Heart right ventricle (tissue), 16 donors: ENCODE measurements at regions of chr12 and their contacts with region 1.

Region 1: GRCh38 chr12:46675736-46676135 is 150.1 kb downstream of the SLC38A4 start:
- DNase-seq: peak in 1 of 2 donors; percentile 15
- ATAC-seq: no peak
- H3K4me3 ChIP-seq: no peak overlapping the region
- H3K27ac ChIP-seq: no peak overlapping the region
- H3K4me1 ChIP-seq: peaks cover 0 to 7% (median 0%) of the 10 kb centered on the region in 9 donors
- H3K27me3 ChIP-seq: no peaks in the 10 kb centered on the region
- CTCF ChIP-seq: peak; percentile 49 to 79 (median 69)

Region 2: DNA sequence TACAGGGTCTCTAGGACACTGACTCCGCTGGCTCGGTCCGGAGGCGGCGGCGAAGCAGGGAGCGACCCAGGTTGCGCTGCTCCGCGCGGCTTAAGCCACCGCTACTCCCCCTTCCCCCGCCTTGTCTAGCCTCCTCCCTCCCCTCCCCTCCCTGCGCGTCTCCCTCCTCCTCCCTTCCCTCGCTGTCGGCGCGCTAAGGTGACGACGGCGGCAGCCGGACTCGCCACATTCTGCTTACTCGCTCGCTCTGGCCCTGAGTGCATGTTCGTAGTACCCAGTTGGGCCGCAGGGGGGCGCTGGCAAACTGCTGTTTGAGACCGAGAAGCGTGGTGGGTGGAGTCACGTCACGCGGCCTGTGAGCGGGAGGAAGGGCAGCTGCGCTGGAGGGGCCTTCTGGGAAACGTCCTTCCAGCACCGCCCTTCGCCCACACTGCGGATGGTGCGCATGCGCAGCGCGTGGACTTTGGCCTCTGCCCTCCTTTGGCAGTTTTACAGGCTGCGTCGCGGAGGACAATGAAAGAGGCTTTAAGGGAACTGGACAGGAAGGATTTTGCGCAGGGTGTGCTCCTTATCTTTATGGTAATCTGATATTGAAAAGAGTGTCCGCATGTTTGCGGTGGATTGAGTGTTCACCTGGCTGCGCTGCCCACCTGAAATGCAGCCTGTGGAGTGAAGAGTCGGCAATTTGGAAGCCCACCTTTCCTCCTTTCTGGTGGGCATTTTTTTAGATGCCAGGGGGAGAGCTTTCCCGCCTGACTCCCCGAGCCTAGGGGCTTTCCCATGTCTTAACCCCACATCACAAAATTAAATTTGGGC is 685.1 kb before region 1 on chr12 and contains the start of gene SCAF11:
- intact Hi-C with region 1: loop called in 1 of 10 experiments (anchors 10 kb)
- DNase-seq: peak; percentile 100
- ATAC-seq: peak; percentile 92 to 97 (median 95)
- H3K4me3 ChIP-seq: peak within 1 kb of the TSS; percentile 68 to 97 (median 86)
- H3K27ac ChIP-seq: peak within 1 kb of the TSS; percentile 96 to 100 (median 99)
- H3K4me1 ChIP-seq: peaks cover 7 to 49% (median 39%) of the 10 kb centered on the region in 9 donors
- H3K27me3 ChIP-seq: no peaks in the 10 kb centered on the region
- CTCF ChIP-seq: peak; percentile 90 to 98 (median 94)
- total RNA-seq, gene SCAF11: 71.9 to 112 (median 87.3) TPM

Region 3: GRCh38 chr12:46124848-46125619 is 550.7 kb before region 1 on chr12:
- intact Hi-C with region 1: loop called in 2 of 10 experiments (anchors 10 kb)
- DNase-seq: peak in 1 of 2 donors; percentile 65
- ATAC-seq: peak; percentile 85 to 94 (median 88)
- H3K4me3 ChIP-seq: peak overlapping the region in 3 of 10 donors; percentile 13 to 19 (median 17)
- H3K27ac ChIP-seq: no peak overlapping the region
- H3K4me1 ChIP-seq: peaks cover 0 to 14% (median 5%) of the 10 kb centered on the region in 9 donors
- H3K27me3 ChIP-seq: no peaks in the 10 kb centered on the region
- CTCF ChIP-seq: peak; percentile 37 to 81 (median 58)

Region 4: DNA sequence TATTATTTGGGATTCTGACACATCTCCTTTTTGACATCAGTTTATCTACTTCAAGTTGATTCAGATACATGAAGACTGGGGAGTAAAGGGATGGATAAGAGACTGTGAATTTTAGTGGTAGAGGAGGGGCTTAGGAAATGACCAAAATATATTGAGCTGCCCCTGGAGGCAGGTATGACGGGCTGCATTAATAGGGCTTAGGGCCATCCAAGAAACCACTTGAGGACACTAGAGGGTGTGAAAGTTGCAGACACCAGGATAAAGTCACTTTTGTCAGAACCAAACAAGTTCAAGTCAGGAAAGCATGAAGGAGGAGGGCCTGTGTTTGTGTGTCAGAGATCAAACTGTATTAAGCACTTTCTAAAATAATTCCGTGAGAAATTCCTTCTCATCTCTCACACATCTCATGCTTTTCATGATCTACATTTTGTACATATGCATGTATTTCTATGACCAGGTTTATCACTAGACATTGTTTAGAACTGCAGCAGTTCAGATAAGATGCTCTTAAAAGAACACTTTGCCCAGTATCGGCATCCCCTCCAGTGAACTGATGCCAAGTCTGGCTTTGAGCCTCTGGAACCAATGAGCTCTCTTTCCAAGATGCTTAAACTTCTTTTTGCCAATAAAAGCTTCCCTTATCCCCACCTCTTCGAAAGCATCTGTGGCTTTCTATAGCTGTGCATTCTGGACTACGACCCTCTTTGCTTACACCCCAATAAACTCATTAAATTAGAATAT is 543.8 kb before region 1 on chr12:
- intact Hi-C with region 1: loop called in 2 of 10 experiments (anchors 10 kb)
- DNase-seq: no peak
- ATAC-seq: peak in 2 of 8 donors; percentile 37 to 39
- H3K4me3 ChIP-seq: no peak overlapping the region
- H3K27ac ChIP-seq: no peak overlapping the region
- H3K4me1 ChIP-seq: peaks cover 0 to 8% (median 0%) of the 10 kb centered on the region in 9 donors
- H3K27me3 ChIP-seq: no peaks in the 10 kb centered on the region
- CTCF ChIP-seq: peak in 4 of 9 donors; percentile 12 to 22 (median 20)

Region 5: GRCh38 chr12:46933947-46934346 is 258.2 kb after region 1 on chr12:
- intact Hi-C with region 1: loop called (anchors 2 to 10 kb)
- DNase-seq: no peak
- ATAC-seq: peak in 5 of 8 donors; percentile 54 to 86 (median 60)
- H3K4me3 ChIP-seq: no peak overlapping the region
- H3K27ac ChIP-seq: no peak overlapping the region
- H3K4me1 ChIP-seq: no peaks in the 10 kb centered on the region
- H3K27me3 ChIP-seq: no peaks in the 10 kb centered on the region
- CTCF ChIP-seq: peak; percentile 28 to 70 (median 63)

Region 6: GRCh38 chr12:46983393-46984266 is 307.9 kb after region 1 on chr12:
- intact Hi-C with region 1: loop called in 1 of 10 experiments (anchors 5 kb)
- DNase-seq: no peak
- ATAC-seq: peak in 6 of 8 donors; percentile 53 to 78 (median 58)
- H3K4me3 ChIP-seq: no peak overlapping the region
- H3K27ac ChIP-seq: no peak overlapping the region
- H3K4me1 ChIP-seq: no peaks in the 10 kb centered on the region
- H3K27me3 ChIP-seq: peaks cover 0 to 10% (median 0%) of the 10 kb centered on the region in 7 donors
- CTCF ChIP-seq: peak; percentile 42 to 75 (median 72)

Region 7: GRCh38 chr12:47021298-47021697 is 345.6 kb after region 1 on chr12:
- intact Hi-C with region 1: loop called in 4 of 10 experiments (anchors 5 to 10 kb)
- DNase-seq: peak in 1 of 2 donors; percentile 21
- ATAC-seq: peak in 3 of 8 donors; percentile 37 to 50 (median 42)
- H3K4me3 ChIP-seq: no peak overlapping the region
- H3K27ac ChIP-seq: no peak overlapping the region
- H3K4me1 ChIP-seq: peaks cover 0 to 9% (median 0%) of the 10 kb centered on the region in 9 donors
- H3K27me3 ChIP-seq: no peaks in the 10 kb centered on the region
- CTCF ChIP-seq: peak; percentile 32 to 83 (median 70)